ENCODE measurements at regions of chr19 and their contacts with region 1.

Region 1: GRCh38 chr19:6862673-6863078 is 24.7 kb upstream of the ADGRE1 start:
- DNase-seq: peak; percentile 91
- H3K4me3 ChIP-seq: peak overlapping the region; percentile 57
- H3K27ac ChIP-seq: no peak overlapping the region
- H3K4me1 ChIP-seq: no peaks in the 10 kb centered on the region
- H3K27me3 ChIP-seq: no peaks in the 10 kb centered on the region

Region 2: DNA sequence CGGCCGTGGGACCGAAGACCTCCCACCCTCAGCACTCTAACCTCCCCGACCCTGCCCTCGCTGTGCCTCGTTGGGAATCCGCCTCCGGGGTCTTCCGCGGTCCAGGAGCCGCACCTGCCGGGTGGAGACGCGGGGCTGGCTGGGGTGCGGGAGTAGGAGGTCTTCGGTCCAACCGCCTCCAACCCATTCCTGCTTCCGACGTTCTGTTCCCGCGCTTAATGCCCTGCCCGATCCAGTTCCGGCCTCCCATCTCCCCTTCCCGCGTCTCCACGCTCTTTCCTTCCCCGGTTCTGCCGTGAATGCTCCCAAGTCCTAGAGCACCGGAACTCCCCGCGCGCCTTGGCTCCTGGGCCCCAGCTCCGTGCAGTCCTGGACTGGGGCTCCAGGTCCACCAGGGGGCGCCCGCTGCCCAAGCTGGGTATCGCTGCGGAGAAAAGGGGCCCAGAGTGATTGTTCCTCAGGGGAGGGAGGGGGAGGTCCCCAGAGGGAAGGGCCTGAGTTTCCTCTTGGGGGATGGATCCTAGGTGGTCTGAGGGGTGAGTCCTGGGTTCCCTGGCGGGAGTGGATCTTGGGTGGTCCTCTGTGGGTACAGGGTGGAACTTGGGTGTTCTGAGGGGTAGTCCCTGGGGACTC is 345.9 kb before region 1 on chr19:
- in situ Hi-C with region 1: loop called (anchors 10 kb)
- DNase-seq: peak; percentile 94
- H3K4me3 ChIP-seq: peak overlapping the region; percentile 84
- H3K27ac ChIP-seq: peak overlapping the region; percentile 44
- H3K4me1 ChIP-seq: peaks cover 7% of the 10 kb centered on the region
- H3K27me3 ChIP-seq: no peaks in the 10 kb centered on the region

Region 3: DNA sequence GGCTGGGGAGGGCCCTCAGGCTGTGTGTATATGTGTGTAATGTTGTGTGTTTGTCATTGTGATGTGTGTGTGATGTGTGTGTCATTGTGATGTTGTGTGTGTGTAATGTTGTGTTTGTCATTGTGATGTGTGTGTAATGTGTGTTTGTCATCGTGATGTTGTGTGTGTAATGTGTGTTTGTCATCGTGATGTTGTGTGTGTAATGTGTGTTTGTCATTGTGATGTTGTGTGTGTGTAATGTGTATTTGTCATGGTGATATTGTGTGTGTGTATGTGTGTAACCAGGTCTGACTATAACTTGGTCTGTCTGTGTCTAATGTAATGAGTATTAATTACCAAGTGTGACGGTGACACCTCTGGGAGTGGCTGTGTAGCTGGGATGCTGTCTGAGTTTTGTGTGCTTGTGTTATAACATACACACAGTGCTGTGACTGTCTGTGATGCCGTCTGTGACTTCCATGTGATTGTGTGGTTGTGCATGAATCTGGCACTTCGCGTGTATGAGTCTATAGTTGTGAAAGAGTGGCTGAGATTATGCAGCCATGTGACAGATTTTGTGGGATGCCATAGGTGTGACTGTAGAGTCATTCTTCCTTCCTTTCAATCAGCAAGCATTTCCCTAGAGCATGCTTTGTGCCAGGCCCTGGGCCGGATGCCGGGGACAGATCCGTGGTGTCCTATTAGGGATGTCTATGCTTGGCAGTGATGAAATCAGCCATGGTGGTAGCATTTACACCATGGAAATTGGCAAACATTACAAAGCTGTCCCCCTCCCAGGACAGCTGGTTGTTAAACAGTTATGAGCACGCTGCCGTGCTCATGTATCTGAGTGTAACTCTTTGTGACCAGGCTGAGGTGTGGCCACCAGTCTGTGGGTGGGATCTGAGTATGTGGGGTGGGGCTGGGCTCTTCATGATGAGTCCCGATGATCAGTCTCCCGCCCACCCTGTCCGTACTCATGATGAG is 199.2 kb before region 1 on chr19:
- in situ Hi-C with region 1: no loop called
- DNase-seq: peak; percentile 53
- H3K4me3 ChIP-seq: no peak overlapping the region
- H3K27ac ChIP-seq: no peak overlapping the region
- H3K4me1 ChIP-seq: no peaks in the 10 kb centered on the region
- H3K27me3 ChIP-seq: no peaks in the 10 kb centered on the region; the same call in 1 of the 2 replicates